BJ (cell line): ENCODE measurements at regions of chr19 and their contacts with region 1.

Region 1: GRCh38 chr19:45455707-45456499 is 11.9 kb upstream of the FOSB start:
- DNase-seq: peak; percentile 99
- H3K4me3 ChIP-seq: 0 out of 2 replicates have a peak overlapping the region, but pooled peaks have one; percentile 2
- H3K27me3 ChIP-seq: no peaks in the 10 kb centered on the region
- CTCF ChIP-seq: no peak

Region 2: DNA sequence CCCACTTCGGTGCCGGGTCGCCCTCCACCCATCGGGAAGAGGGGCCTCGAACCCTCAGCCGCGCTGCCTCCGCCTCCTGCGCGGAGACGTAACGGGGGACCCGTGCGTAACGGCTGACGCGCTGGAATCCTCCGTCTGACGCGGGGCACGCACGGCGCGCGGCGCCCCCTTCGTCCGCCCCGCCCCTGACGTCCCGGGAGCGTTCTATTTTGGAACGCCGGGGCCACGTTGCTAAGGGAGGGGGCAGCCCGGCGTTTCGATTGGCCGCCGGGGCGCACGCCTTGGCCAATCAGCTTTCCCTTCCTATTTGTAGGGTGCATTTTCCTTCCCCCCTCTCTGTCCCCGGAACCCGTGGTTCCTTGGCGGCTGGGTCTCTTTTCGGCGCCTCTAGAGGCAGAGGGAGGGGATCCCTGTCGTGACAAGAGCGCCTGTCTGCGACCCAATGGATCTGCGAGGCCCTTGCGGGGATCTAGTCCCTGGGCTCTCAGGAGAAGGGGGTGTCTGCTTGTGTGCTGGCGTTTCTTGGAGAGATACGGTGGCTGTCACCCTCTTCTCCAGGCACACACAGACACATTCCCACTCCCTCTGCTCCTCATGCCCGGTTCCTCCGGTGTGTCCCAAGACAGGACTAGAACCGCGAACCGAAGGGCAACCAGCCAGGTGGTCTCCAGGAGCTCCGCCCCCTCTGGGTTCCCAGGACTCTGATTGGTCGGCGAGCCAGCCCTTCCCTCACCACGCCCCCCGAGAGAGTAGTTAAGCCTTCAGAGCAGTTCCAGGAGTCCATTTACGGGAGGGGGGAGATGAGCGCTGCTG is 13.4 kb after region 1 on chr19:
- CTCF ChIA-PET with region 1: interaction called, 17 read pairs
- POLR2A ChIA-PET with region 1: interaction called, 11 read pairs
- DNase-seq: no peak
- H3K4me3 ChIP-seq: peak overlapping the region; percentile 77
- H3K27me3 ChIP-seq: no peaks in the 10 kb centered on the region
- CTCF ChIP-seq: 0 out of 2 replicates have a peak, but pooled peaks have one; percentile 8

Region 3: DNA sequence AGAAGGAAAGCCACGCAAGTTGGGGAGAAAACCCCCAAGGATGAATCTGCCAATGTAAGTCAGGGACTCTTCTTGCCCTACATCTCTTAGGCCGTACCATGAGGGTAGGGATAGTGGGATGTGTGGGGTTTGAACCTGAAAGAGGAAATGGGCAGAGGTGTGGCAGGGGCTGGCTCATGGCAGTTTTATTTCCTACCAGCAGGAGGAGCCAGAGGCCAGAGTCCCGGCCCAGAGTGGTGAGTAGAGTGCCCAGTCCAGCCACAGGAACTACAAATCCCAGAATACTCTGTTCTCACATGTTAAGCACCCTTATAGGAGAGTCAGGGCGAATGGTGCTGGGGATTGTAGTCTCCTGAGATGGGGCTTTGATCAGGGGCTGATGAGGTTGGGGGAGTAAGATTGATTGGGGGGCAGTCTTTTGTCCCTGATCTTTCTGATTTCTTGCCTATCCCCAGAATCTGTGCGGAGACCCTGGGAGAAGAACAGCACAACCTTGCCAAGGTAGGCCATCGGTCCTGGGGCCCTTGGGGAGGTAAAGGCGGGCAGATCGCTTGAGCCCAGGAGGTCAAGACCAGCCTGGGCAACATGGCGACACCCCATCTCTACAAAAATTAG is 67.8 kb after region 1 on chr19:
- CTCF ChIA-PET with region 1: no interaction called
- POLR2A ChIA-PET with region 1: no interaction called
- DNase-seq: no peak
- H3K4me3 ChIP-seq: no peak overlapping the region
- H3K27me3 ChIP-seq: no peaks in the 10 kb centered on the region
- CTCF ChIP-seq: peak; percentile 85

Region 4: GRCh38 chr19:45547976-45548609 is 92.2 kb after region 1 on chr19:
- CTCF ChIA-PET with region 1: no interaction called
- POLR2A ChIA-PET with region 1: no interaction called
- DNase-seq: peak; percentile 66
- H3K4me3 ChIP-seq: no peak overlapping the region
- H3K27me3 ChIP-seq: no peaks in the 10 kb centered on the region
- CTCF ChIP-seq: no peak